ENCODE measurements at regions of chr5 and their contacts with region 1.

Region 1: DNA sequence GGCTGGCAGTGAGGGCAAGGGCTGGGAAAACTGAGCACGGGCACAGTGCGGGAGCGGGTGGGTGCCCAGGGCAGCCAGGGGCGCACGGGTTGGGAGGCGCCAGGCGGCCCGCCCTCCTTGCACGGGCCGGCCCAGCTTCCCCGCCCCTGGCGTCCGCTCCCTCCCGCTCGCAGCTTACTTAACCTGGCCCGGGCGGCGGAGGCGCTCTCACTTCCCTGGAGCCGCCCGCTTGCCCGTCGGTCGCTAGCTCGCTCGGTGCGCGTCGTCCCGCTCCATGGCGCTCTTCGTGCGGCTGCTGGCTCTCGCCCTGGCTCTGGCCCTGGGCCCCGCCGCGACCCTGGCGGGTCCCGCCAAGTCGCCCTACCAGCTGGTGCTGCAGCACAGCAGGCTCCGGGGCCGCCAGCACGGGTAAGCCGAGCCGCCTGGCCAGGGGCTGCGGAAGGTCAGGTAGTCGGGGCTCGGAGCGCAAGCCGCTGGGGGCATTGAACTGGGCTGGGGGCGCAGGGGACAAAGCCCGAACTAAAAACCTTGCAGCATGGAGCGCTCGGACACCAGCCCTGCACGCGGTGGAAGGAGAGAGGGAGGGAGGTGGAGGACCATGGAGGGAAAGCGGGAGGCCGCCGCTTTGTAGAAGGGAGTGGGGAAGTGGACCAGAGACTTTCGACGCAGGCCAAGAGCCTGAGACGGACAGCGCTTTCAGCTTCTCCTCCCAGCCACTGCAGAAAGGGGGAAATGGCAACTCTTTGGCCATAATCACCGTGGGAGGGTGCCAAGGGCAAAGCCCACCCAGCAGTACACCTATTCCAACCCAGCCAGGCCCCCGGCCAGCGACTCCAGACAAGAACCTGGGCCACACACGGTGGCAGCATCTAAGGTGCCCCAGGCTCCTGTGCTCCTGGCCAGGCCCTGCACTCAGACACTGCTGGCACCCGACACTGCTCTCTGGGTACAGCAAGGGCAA is at the start of gene TGFBI:
- DNase-seq: peak; percentile 76 to 90 (median 82)
- ATAC-seq: peak; percentile 56 to 93 (median 90)
- H3K4me3 ChIP-seq: peak within 1 kb of the TSS; percentile 51 to 86 (median 70)
- H3K27ac ChIP-seq: peak within 1 kb of the TSS in 11 of 12 donors; percentile 50 to 89 (median 77)
- H3K4me1 ChIP-seq: peaks cover 5 to 92% (median 45%) of the 10 kb centered on the region in 12 donors
- H3K27me3 ChIP-seq: no peaks in the 10 kb centered on the region
- CTCF ChIP-seq: peak in 4 of 12 donors; percentile 12 to 49 (median 26)
- POLR2A ChIP-seq: peak in 1 of 2 donors; percentile 66
- total RNA-seq, gene TGFBI: 31.8 to 206 (median 42.9) TPM

Region 2: DNA sequence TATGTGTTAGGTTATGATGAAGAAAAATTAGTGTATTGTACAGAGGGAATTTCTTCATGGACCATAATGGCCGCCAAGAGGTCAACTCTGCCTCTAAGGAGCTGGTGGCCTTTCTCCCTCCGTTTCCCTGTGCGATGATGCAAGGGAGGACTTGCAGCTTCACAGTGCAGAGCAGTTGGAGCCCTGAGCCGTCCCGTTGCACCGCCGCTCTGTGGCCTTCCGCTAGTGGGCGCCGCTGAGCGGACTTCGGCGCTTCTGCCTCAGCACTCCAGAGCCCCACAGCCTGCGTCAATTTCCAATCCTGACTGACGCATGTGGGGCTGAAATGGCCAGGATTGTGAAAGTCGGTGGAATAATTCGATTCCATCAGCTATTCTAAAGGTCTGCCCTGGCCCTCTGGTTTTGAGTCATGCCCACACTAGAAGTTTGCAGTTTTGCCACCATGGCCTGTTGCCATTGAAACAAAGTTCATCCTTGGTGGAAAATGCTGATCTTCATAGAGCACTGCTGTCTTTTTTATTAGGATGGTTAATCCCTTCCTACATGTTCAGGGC is 51.6 kb before region 1 on chr5:
- intact Hi-C with region 1: loop called in 5 of 10 experiments (anchors 5 kb)
- DNase-seq: peak; percentile 54 to 88 (median 71)
- ATAC-seq: peak; percentile 60 to 94 (median 79)
- H3K4me3 ChIP-seq: no peak overlapping the region
- H3K27ac ChIP-seq: peak overlapping the region in 1 of 12 donors; percentile 5
- H3K4me1 ChIP-seq: peaks cover 0 to 44% (median 22%) of the 10 kb centered on the region in 12 donors
- H3K27me3 ChIP-seq: no peaks in the 10 kb centered on the region
- CTCF ChIP-seq: peak; percentile 36 to 66 (median 52)
- POLR2A ChIP-seq: no peak

Region 3: DNA sequence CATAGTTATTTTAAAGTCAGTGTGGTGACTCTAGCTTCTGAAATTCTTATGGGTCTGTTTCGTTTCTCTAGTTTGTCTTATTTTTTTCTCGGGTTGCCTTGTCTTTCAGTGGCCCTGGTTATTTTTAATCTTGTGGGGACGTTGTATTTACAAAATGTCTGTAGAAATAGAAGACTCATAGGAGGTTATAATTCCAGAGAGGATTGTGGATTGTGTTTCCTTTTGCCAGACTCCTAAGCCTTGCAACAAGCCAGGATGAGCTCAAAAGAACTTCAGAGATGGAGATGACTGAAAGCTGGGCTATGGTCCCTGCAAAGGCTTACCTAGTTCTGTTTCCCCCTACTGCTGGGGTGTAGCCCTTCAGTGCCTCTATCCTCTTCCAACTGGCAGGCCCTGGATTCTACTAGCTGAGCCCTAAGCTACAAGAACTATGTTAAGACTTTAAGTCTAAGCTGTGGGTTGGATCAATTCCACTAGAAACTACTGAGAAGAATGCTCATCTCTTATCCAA is 42.1 kb before region 1 on chr5:
- intact Hi-C with region 1: loop called in 2 of 10 experiments (anchors 5 kb)
- DNase-seq: no peak
- ATAC-seq: peak in 2 of 4 donors; percentile 55 to 70
- H3K4me3 ChIP-seq: no peak overlapping the region
- H3K27ac ChIP-seq: peak overlapping the region in 11 of 12 donors; percentile 11 to 86 (median 55)
- H3K4me1 ChIP-seq: peaks cover 0 to 22% (median 4%) of the 10 kb centered on the region in 12 donors
- H3K27me3 ChIP-seq: no peaks in the 10 kb centered on the region
- CTCF ChIP-seq: no peak
- POLR2A ChIP-seq: no peak

Region 4: DNA sequence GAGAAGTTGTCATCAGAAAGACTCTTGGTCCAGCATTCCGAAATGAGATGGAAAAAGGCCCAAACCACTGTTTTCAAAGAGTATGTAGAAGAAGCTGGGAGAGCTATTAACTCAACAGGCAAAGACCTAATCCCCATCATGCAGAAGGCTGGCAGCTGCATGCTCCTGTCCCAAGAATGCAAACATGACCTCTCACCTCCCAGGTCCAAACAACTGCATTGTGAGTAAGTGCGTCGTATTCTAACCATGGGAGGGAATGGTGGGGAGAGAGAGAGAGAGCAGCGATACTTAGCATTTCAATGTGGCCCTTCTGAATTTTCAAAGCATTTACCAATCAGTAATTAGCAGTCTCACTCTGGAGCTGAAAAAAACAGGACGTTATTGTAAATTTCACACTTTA is 308.7 kb after region 1 on chr5:
- intact Hi-C with region 1: no loop called
- DNase-seq: no peak
- ATAC-seq: no peak
- H3K4me3 ChIP-seq: no peak overlapping the region
- H3K27ac ChIP-seq: no peak overlapping the region
- H3K4me1 ChIP-seq: no peaks in the 10 kb centered on the region
- H3K27me3 ChIP-seq: peaks cover 0 to 6% (median 0%) of the 10 kb centered on the region in 9 donors
- CTCF ChIP-seq: no peak
- POLR2A ChIP-seq: no peak

Region 5: GRCh38 chr5:136382791-136383190 is 353.7 kb after region 1 on chr5:
- intact Hi-C with region 1: no loop called
- DNase-seq: no peak
- ATAC-seq: no peak
- H3K4me3 ChIP-seq: no peak overlapping the region
- H3K27ac ChIP-seq: no peak overlapping the region
- H3K4me1 ChIP-seq: no peaks in the 10 kb centered on the region
- H3K27me3 ChIP-seq: peaks cover 0 to 5% (median 0%) of the 10 kb centered on the region in 9 donors
- CTCF ChIP-seq: no peak
- POLR2A ChIP-seq: no peak

Measured in heart left ventricle (tissue), 16 donors.